GM10248 (cell line): ENCODE measurements at regions of chr3 and their contacts with region 1.

Region 1: DNA sequence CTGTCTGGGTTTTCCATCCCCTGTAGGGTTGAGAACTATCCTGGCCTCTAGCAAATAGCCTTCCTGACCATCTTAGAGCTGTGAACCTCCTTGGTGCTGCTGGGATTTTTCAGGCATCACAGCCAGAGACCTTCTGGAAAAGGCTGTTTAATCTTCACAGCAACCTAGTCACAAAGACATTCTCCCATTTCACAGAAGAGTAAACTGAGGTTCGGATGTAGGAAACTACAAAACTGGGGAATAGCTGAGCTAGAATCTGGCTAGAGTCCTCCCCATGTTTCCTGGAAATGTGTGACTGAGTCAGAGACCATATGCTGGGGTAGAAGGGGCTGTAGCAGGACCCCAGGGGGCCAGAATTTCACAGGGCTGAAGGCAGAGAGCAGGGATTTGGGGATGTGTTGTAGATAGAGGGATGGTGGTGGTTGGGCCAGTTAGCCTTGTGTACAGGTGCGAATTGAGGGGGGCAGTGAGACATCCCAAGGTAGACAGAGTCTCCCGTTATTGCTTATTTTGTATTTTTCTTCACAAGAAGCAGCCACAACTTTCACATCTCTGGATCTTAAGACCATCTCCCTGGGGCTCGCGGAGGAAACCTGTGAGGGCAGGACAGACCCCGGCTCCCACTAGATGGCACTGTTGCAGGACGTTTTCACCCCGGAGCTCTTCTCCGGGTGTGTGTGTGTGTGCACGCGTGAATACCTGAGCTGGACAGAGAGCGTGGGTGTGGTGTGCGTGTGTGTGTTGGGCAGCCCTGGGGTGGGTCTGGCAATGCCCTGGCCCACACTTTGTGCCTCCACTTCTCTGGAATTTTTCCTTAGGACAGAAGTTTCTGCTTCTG is 66.9 kb upstream of the PRR23C start:
- DNase-seq: peak; percentile 68
- CTCF ChIP-seq: peak; percentile 78

Region 2: GRCh38 chr3:139095803-139096466 is 15.7 kb before region 1 on chr3:
- CTCF ChIA-PET with region 1: interaction called, 22 read pairs
- POLR2A ChIA-PET with region 1: no interaction called
- DNase-seq: peak; percentile 2
- CTCF ChIP-seq: no peak

Region 3: DNA sequence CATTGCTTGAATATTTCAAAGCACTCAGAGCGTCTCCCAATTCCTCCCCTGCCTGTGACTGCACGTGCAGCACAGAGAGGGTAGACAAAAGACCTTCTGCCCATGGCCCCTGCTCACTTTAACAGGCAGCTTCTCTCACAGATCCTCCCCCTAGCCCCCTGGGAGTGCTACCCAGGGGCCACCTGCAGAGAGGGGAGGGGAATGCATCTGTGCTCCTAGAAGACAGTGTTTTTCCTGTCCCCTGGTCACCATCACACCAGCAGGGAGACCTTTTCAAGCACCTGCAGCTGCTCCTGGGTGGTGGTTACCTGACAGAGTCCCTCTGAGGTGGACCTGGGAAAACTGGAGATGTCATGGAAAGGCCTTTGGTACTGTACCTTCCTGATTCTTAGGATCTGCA is 10.2 kb before region 1 on chr3:
- CTCF ChIA-PET with region 1: interaction called, 22 read pairs
- POLR2A ChIA-PET with region 1: no interaction called
- DNase-seq: no peak
- CTCF ChIP-seq: no peak